OCI-LY7 (cell line): ENCODE measurements at regions of chr5 and their contacts with region 1.

Region 1: GRCh38 chr5:176447982-176448608 is at the start of gene FAF2:
- DNase-seq: peak; percentile 97
- H3K4me3 ChIP-seq: peak within 1 kb of the TSS; percentile 93
- H3K27ac ChIP-seq: peak within 1 kb of the TSS; percentile 71
- H3K4me1 ChIP-seq: peaks cover 20% of the 10 kb centered on the region
- CTCF ChIP-seq: peak; percentile 96
- total RNA-seq, gene FAF2: 27.9 and 36.9 TPM in 2 replicates

Region 2: GRCh38 chr5:176388444-176389134 is 59.5 kb before region 1 on chr5 and contains the starts of genes HIGD2A and NOP16:
- CTCF ChIA-PET with region 1: no interaction called
- POLR2A ChIA-PET with region 1: no interaction called
- intact Hi-C with region 1: loop called (anchors 2 kb)
- DNase-seq: peak; percentile 99
- H3K4me3 ChIP-seq: peak within 1 kb of the TSS; percentile 85
- H3K27ac ChIP-seq: peak within 1 kb of the TSS; percentile 86
- H3K4me1 ChIP-seq: peaks cover 26% of the 10 kb centered on the region
- CTCF ChIP-seq: no peak
- total RNA-seq, gene HIGD2A: 140 and 223 TPM in 2 replicates
- total RNA-seq, gene NOP16: 83.8 and 91.5 TPM in 2 replicates

Region 3: DNA sequence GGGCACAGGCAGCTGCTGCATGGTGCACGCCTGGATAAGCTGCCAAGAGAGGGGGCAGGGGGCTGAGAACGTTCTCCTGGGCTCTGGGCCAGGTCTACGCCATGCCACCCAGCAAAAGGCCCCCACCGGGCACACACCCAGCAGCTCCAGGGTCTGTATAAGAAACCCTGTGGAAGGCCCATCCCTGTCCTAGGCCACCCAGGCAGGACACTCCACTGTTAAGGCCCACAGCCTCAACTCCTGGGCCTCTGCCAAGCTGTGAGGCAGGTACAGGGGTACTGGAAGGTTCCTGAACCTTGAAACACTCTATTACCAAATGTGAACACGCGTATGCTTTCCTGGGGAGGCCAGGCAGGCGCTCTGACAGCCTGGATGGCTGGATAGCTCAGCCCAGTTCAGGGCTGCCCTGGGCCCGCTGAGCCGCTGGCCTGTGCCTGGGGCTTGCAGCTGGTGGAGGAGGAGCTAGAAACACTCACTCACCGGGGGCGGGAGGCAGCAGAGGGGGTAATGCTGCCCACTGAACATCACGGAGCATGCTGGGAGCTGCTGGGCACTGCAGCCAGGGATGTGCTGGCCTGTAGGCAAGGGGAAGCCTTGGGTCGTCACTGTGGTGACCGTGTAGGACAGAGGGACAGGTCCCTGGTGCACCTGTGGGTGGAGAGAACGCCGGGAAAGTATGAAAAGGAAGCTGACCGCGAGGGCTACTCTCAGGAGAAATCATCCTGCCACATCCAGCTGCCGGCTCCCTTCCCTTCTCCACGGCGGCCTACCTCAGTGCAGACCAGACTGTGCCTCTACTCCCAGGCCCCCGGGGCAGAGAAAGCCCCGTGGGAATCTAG is 83.1 kb after region 1 on chr5:
- CTCF ChIA-PET with region 1: interaction called, 6 read pairs
- POLR2A ChIA-PET with region 1: interaction called, 5 read pairs
- intact Hi-C with region 1: loop called (anchors 2 kb)
- DNase-seq: peak; percentile 50
- H3K4me3 ChIP-seq: peak overlapping the region; percentile 64
- H3K27ac ChIP-seq: peak overlapping the region; percentile 99
- H3K4me1 ChIP-seq: peaks cover 89% of the 10 kb centered on the region
- CTCF ChIP-seq: no peak

Region 4: DNA sequence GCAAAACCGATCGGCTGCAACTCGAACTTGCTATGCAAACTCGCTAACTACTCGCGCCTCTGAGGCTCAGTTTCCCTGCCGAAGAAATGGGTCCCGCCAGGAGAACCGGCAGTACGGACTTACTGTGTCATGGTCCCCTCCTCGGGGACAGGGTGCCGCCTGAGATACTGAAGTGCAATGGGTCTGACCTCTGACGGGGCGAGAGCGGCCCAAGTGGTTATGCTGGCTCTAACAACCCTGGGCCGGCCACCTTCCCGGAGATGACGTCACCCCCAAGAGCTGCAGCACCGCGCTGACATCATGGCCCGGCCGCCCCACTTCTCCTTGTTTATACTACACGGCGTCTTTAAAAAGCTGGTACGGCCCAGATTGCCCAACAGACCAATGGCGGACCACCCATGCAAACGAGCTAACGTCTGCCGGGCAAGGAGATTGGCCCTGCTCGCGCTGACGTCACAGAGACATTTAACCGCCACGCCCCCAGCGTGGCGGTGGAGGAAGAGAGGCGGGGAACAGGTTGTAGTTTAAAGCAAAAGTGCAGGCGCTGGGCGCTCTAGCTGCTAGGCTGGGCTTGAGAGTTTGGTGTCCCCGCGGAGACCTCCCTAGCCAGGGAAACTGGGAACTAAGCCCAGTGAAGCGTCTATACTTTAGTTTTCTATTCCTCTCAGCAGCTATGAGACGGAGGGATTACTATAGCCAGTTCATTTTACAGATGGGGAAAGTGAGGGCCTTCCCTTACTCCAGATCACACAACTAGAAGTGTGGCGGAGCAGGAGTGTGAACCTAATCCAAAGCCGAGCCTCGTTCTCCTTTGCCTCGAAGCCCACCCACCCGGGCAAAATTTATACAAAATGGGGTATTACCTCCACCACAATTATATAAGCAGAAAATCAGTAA is 89.8 kb after region 1 on chr5:
- CTCF ChIA-PET with region 1: interaction called, 5 read pairs
- POLR2A ChIA-PET with region 1: interaction called, 5 read pairs
- intact Hi-C with region 1: loop called (anchors 2 kb)
- DNase-seq: peak; percentile 100
- H3K4me3 ChIP-seq: peak overlapping the region; percentile 79
- H3K27ac ChIP-seq: peak overlapping the region; percentile 99
- H3K4me1 ChIP-seq: peaks cover 66% of the 10 kb centered on the region
- CTCF ChIP-seq: no peak

Region 5: DNA sequence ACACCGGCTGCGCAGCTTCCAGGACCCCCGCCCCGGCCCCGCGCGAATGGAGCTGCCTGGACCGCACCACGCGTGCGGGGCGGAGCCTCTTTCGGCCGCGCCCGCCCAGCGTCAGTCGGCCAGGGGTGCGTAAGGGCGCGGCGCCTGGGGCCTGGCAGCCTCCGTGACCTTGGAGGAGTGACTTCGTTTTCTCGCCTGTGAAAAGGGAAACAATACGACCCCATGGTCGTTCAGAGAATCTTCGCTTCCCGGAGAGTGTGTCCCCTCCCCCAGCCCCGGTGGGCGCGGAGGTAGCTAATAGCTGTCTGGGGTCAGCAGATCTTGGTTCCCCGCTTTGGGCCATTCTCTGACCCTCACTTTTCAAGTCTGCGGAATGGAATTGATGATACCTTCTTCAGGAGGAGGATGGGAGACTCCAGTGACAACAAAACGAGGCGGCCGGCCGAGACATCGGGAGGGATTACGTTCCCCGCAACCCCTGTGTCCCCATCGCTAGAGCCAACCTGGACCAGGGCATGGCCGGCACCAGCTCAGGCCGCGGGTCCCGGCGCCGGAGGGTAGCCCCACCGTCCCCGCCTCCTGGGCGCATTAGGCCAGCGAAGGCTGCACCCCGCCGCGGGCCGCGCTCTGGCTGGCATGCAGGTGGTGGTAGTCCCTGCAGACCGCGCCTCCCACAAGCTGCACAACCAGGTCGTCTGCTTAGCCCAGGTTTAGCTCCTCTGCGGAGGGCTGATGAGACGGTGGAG is 95.5 kb after region 1 on chr5:
- CTCF ChIA-PET with region 1: interaction called, 14 read pairs
- POLR2A ChIA-PET with region 1: interaction called, 4 read pairs
- intact Hi-C with region 1: no loop called
- DNase-seq: peak; percentile 88
- H3K4me3 ChIP-seq: peak overlapping the region; percentile 75
- H3K27ac ChIP-seq: peak overlapping the region; percentile 83
- H3K4me1 ChIP-seq: peaks cover 70% of the 10 kb centered on the region
- CTCF ChIP-seq: no peak

Region 6: DNA sequence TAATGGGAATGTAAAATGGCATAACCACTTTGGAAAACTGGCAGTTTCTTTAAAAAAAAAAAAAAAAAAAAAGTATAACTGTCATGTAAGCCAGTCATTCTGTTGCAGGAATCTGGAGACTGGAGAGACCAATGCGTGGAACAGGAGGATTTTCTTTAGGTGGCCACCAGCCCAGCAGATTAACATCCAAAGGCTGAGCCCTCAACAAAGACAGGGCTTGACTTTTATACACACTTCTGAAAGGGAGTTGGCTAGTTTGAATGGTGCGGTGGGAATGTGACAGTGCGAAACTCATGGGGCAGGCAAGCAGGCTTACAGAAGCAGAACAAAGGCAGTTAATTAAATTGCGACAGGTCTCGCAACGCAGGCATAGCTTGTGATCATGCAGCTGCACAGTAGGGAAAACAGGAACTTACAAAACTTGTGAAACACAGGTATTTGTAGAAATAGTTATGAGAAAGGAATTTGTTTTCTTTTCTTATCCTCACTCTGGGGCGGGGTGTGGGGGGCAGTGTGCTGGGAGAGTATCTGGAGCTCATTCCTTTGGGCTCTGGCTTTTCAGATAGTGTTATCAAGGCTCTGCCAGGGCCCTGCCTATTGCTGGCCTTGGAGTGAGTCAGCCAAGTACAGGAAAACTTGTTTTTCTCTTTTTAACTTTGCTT is 546.5 kb after region 1 on chr5:
- CTCF ChIA-PET with region 1: no interaction called
- POLR2A ChIA-PET with region 1: no interaction called
- intact Hi-C with region 1: loop called (anchors 10 kb)
- DNase-seq: peak; percentile 95
- H3K4me3 ChIP-seq: peak overlapping the region; percentile 47
- H3K27ac ChIP-seq: peak overlapping the region; percentile 92
- H3K4me1 ChIP-seq: peaks cover 74% of the 10 kb centered on the region
- CTCF ChIP-seq: no peak